K562 (cell line): ENCODE measurements at regions of chr2 and their contacts with region 1.

Region 1: DNA sequence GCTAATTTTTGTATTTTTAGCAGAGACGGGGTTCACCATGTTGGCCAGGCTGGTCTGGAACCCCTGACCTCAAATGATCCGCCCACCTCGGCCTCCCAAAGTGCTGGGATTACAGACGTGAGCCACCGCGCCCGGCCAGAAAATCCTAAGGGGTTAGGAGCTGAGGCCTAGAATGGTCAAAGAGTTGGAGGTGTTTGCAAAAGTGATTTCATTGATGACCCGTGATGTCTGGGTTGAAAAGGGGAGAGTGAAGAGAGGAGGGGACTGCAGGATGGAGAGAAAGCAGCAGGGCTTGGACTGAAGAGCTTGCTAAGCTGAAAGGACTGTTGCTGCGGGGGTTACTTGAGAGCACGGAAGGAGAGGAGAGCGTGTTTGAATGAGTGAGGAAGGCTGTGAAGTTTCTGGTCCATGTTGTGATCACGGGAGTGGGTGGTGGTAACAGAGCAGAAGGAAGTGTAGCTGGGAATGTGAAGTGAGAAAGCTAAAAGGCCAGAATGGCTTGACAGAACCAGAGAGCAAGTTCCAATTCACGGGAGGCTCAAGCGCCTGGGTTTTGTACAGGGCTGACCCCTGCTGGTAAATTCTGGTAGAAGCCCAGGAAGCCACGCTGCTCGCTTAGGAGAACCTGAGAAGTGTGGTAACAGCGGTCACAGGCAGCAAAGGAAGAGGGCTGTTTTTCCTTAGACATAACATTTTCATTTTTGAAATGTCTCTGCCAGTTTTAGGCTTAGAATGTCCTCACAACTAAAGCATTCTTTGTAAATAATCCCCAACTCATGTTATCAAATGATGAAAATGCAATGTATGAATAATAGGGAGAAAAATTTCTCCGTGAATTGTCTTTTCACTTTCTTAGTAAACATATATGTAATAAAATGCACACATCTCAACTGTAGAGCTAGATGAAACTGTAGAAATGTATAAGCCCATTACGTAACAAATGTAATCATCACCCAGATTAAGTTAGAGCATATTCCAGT is 40.5 kb upstream of the ACTR2 start:
- DNase-seq: peak; percentile 80 to 87 (median 82)
- ATAC-seq: peak; percentile 99
- H3K4me3 ChIP-seq: no peak overlapping the region
- H3K27ac ChIP-seq: no peak overlapping the region
- H3K4me1 ChIP-seq: peaks cover 3 to 4% of the 10 kb centered on the region in 2 experiments; a peak in 2 of 5 replicates
- H3K27me3 ChIP-seq: no peaks in the 10 kb centered on the region
- CTCF ChIP-seq: peak; percentile 83 to 90 (median 87)
- EP300 ChIP-seq: no peak
- POLR2A ChIP-seq: no peak
- RAD21 ChIP-seq: peak; percentile 71 to 89

Region 2: DNA sequence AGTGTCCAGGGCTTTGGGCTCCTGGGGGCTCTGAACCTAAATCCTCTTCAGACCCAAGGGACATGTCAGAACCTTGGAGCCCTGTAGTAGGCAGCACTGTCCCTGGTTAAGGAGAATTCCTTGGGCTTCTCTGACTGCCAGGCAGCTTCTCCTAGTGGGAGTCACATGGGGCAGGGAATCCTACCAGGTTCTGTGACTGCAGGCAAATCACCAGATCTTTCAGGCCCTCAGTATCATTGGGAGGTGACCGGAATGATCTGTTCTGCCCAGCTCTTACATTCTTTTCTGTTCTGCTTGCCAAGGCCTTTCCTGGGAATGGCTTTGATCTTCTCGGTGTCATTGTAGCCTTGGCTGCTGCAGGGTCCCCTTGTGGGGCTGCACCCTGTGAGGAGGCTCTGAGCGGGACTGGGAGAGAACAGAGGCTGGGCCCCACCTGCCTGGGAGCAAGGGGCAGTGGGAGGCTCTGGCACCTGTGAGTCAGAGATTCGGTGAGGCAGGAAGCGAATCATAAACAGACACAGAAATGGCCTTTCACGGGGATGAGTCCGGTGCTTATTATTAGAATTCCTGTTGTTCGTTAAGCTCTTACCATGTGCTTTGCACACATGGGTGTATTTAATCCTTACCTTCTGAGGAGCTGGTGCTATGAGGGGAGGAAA is 116.9 kb before region 1 on chr2:
- CTCF ChIA-PET with region 1: interaction called, 16 read pairs
- POLR2A ChIA-PET with region 1: no interaction called
- in situ Hi-C with region 1: loop called (anchors 5 kb)
- intact Hi-C with region 1: no loop called
- DNase-seq: no peak
- ATAC-seq: peak; percentile 10; the same call in 1 of the 3 replicates
- H3K4me3 ChIP-seq: no peak overlapping the region
- H3K27ac ChIP-seq: no peak overlapping the region
- H3K4me1 ChIP-seq: peaks cover 9 to 11% of the 10 kb centered on the region in 2 experiments; a peak in 4 of 5 replicates
- H3K27me3 ChIP-seq: no peaks in the 10 kb centered on the region
- CTCF ChIP-seq: no peak
- EP300 ChIP-seq: no peak
- POLR2A ChIP-seq: no peak
- RAD21 ChIP-seq: peak in 1 of 2 experiments; percentile 7; a peak in 1 of 4 replicates

Region 3: GRCh38 chr2:65576861-65577601 is 389.9 kb after region 1 on chr2:
- CTCF ChIA-PET with region 1: interaction called, 3 read pairs
- POLR2A ChIA-PET with region 1: no interaction called
- in situ Hi-C with region 1: no loop called
- intact Hi-C with region 1: loop called (anchors 5 kb)
- DNase-seq: peak in 1 of 4 experiments; percentile 52
- ATAC-seq: peak; percentile 53; the same call in 2 of the 3 replicates
- H3K4me3 ChIP-seq: no peak overlapping the region
- H3K27ac ChIP-seq: no peak overlapping the region
- H3K4me1 ChIP-seq: peaks cover 2 to 4% of the 10 kb centered on the region in 2 experiments; a peak in 3 of 5 replicates
- H3K27me3 ChIP-seq: peaks cover 3 to 12% of the 10 kb centered on the region in 2 experiments; a peak in 4 of 5 replicates
- CTCF ChIP-seq: no peak
- EP300 ChIP-seq: no peak
- POLR2A ChIP-seq: no peak
- RAD21 ChIP-seq: no peak